ENCODE measurements at regions of chr1 and their contacts with region 1.

Region 1: DNA sequence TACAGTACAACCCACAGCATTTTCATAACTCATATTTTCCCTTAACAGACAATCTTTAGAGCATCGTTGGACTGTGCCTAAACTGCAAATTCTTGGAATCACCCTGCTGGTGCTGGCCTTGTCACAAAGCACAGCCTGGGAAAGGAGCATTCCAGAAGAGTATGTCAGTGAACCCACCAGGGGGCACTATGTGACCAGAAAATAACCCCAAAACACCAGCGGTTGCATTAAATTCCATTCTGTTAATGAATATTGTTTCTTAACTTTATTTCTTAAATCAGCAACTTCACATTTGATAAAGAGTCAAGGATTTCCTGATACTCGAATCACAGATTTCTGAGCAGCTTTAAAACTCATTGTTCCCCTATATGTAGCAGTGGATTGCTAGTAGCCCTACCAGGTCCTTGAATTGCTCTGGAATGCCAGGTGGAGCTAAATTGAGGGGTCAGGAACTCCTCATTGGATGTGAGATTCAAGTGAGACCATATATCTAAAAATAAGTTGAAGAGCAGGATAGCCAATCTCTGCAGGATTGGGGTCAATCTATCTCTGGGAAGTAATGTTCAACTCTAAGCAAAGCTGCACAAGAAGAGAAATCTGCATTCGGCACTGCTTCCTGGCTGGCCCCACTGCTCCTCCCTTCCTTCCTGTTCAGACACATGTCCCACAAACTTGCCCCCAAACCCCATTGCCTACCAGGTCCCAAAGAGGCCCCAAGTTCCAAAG is 12.7 kb upstream of the RAB4A start:
- DNase-seq: peak; percentile 50 to 87
- ATAC-seq: peak in 2 of 3 donors; percentile 55 to 70
- H3K4me3 ChIP-seq: no peak overlapping the region
- H3K4me3 Mint-ChIP-seq: peak overlapping the region; percentile 37
- H3K27ac ChIP-seq: no peak overlapping the region
- H3K27ac Mint-ChIP-seq: peak overlapping the region in 1 of 2 donors; percentile 74
- H3K4me1 ChIP-seq: peaks cover 23% of the 10 kb centered on the region
- H3K4me1 Mint-ChIP-seq: peaks cover 25 to 27% of the 10 kb centered on the region in 2 donors
- H3K27me3 ChIP-seq: no peaks in the 10 kb centered on the region
- H3K27me3 Mint-ChIP-seq: no peaks in the 10 kb centered on the region
- CTCF ChIP-seq: peak; percentile 87

Region 2: DNA sequence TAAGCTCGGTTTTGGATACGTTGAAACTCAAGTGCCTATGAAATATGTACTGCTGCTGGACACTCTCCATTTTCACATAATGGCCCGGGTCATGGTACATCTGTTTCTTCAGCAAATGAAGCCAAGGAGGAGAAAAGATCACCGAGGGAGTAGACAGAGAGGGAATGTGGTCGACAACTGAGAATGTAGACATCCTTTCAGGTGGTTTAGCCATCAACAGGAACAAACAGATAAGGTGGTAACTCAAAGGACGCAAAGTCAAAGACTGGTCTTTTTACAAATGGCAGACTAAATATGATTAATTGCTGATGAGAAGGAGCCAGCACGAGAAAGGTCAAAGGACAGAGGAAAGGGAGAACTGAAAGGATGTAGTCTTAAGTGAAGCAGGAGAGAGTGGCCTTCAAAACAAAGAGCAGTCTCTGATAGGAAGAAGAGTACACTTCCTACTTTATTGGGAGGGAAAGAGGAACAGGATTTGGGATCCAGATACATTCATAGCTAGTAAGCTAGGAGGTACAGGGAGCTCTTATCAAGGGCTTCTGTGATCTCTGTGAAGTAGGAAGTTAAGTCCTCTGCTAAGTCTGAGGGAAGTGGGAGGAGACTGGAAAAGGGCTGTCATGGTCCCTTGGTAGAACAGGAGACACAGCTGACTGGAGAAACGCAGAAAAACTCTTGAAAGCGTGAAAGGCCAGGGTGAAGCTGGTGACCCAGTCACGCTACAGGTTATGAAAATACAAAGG is 221.6 kb after region 1 on chr1:
- intact Hi-C with region 1: loop called (anchors 1 kb)
- DNase-seq: no peak
- ATAC-seq: peak; percentile 14 to 51 (median 47)
- H3K4me3 ChIP-seq: no peak overlapping the region
- H3K4me3 Mint-ChIP-seq: no peak overlapping the region
- H3K27ac ChIP-seq: peak overlapping the region; percentile 60
- H3K27ac Mint-ChIP-seq: peak overlapping the region; percentile 52 to 71
- H3K4me1 ChIP-seq: peaks cover 3% of the 10 kb centered on the region
- H3K4me1 Mint-ChIP-seq: peaks cover 26 to 29% of the 10 kb centered on the region in 2 donors
- H3K27me3 ChIP-seq: no peaks in the 10 kb centered on the region
- H3K27me3 Mint-ChIP-seq: no peaks in the 10 kb centered on the region
- CTCF ChIP-seq: no peak

Region 3: DNA sequence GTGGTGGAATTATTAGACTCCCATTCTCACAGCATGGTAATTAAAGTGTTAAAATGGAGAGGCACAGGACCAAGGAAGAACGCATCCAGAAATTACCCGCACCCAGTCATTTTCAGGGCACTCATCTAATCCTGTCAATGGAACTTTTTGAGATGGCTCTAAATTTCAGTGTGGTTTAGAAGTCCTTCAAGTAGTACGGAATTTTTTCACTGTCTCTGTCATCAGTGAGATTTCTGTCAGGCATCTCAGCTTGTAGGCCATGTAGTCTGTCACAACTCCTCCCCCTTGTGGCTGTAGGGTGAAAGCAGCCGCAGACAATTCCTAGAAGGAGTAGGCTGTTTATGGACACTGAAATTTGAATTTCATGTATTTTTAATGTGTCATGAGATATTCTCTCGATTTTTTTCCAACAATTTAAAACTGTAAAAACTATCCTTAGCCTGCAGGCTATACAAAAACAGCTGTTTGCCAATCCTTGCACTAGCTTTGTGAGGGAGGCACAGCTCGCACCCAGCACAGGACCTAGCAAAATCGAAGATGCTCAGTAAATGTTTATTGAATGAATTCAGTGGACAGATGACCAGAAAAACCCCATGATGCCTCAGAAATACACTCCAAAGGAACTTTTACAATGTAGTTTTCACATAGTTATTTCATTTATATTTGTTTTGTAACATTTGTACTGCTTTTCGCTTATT is 256.5 kb after region 1 on chr1:
- intact Hi-C with region 1: loop called (anchors 1 kb)
- DNase-seq: peak; percentile 30 to 85
- ATAC-seq: peak; percentile 82 to 99 (median 95)
- H3K4me3 ChIP-seq: no peak overlapping the region
- H3K4me3 Mint-ChIP-seq: no peak overlapping the region
- H3K27ac ChIP-seq: no peak overlapping the region
- H3K27ac Mint-ChIP-seq: peak overlapping the region in 1 of 2 donors; percentile 38
- H3K4me1 ChIP-seq: peaks cover 3% of the 10 kb centered on the region
- H3K4me1 Mint-ChIP-seq: peaks cover 5 to 6% of the 10 kb centered on the region in 2 donors
- H3K27me3 ChIP-seq: no peaks in the 10 kb centered on the region
- H3K27me3 Mint-ChIP-seq: peaks cover 0 to 4% of the 10 kb centered on the region in 2 donors
- CTCF ChIP-seq: peak; percentile 70

Region 4: GRCh38 chr1:229661022-229661877 is 403.1 kb after region 1 on chr1:
- intact Hi-C with region 1: loop called (anchors 10 kb)
- DNase-seq: peak; percentile 53 to 80
- ATAC-seq: peak; percentile 60 to 76 (median 70)
- H3K4me3 ChIP-seq: no peak overlapping the region
- H3K4me3 Mint-ChIP-seq: no peak overlapping the region
- H3K27ac ChIP-seq: no peak overlapping the region
- H3K27ac Mint-ChIP-seq: no peak overlapping the region
- H3K4me1 ChIP-seq: peaks cover 13% of the 10 kb centered on the region
- H3K4me1 Mint-ChIP-seq: no peaks in the 10 kb centered on the region
- H3K27me3 ChIP-seq: no peaks in the 10 kb centered on the region
- H3K27me3 Mint-ChIP-seq: no peaks in the 10 kb centered on the region
- CTCF ChIP-seq: peak; percentile 73

Region 5: DNA sequence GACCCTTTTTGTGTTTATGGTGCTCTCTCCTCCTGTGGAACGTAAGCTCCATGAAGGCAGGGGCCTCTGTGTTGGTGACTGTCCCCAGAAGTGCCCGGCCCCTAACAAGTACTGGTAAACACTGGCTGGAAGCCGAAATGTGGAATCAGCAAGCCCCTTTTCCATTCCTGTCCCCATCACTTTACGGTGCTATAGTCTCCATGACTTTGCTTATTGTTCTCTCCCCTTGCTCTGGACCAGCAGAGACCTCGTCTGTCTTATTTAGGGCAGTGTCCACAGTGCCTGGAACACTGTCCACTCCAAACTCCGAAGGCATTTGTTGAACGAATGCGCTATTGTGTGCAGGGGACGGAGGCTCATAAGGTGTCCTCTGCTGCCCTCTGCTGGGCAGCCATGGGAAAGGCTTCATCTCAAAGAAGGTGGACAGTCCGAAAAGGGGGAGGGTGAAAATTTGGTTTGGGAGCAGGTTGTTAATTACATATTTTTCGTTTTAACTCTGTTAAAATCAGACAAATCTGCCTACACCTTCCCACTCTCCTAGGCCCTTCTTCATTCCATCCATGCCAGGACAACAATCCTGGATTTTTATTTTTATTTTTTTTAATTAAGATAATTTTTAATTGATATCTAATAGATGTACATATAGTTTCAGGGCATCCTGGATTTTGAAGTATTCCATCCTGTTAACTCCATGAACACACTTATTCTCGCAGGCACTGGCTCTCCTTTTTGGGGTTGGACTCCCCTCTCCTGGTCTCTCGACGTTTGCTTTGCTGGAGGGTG is 1052.4 kb after region 1 on chr1:
- intact Hi-C with region 1: loop called (anchors 1 kb)
- DNase-seq: peak; percentile 63 to 86
- ATAC-seq: peak; percentile 84 to 95 (median 95)
- H3K4me3 ChIP-seq: no peak overlapping the region
- H3K4me3 Mint-ChIP-seq: no peak overlapping the region
- H3K27ac ChIP-seq: no peak overlapping the region
- H3K27ac Mint-ChIP-seq: no peak overlapping the region
- H3K4me1 ChIP-seq: no peaks in the 10 kb centered on the region
- H3K4me1 Mint-ChIP-seq: peaks cover 5% of the 10 kb centered on the region in 2 donors
- H3K27me3 ChIP-seq: no peaks in the 10 kb centered on the region
- H3K27me3 Mint-ChIP-seq: peaks cover 0 to 7% of the 10 kb centered on the region in 2 donors
- CTCF ChIP-seq: peak; percentile 95